Activated naive CD4-positive, alpha-beta T cell treated with anti-CD3 and anti-CD28 coated beads for 36 hours (primary cell): ENCODE measurements at regions of chr20 and their contacts with region 1.

Region 1: DNA sequence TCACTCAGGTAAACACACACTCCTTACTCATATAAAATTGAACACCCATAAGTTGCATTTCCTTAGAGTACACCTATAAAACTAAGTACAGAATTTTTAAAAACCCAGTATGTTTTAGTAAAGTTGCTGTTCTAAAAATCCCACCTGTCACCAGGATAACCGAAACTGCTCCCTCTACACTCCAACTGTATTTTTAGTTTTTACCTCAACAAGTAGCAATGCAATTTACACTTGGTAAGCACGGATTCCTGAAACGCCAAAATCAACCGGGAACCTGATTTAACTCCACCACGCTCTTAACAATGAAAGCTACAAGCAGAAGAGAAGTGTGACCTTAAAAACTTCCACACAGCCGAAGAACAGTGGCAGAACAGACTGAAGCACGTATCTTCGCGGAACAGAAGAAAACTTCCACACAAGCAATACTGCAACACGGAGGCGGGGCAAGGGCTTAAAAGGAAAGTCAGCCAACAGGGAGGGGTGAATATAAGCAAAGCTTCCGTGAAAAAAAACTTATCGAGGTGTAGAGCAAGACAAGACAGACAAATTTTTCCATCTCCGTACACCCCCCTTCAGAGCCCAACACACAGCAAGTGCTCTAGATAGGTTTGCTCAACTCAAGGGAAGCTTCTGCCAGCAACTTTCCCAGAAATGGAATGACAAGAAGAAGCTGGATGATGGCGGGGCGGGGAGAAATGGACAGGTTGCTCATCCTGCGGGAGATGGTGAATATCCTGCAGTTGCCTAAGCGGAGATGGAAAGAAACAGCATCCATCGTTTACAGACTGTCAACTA is 1.4 kb downstream of the STAU1 start:
- DNase-seq: peak; percentile 84
- H3K4me3 Mint-ChIP-seq: peak overlapping the region; percentile 82
- H3K27ac Mint-ChIP-seq: peak overlapping the region; percentile 90
- H3K4me1 Mint-ChIP-seq: peaks cover 49% of the 10 kb centered on the region
- H3K27me3 Mint-ChIP-seq: no peaks in the 10 kb centered on the region

Region 2: GRCh38 chr20:49046087-49046900 is 140.4 kb before region 1 on chr20 and contains the start of gene CSE1L:
- CTCF ChIA-PET with region 1: no interaction called
- intact Hi-C with region 1: loop called (anchors 1 kb)
- DNase-seq: peak; percentile 96
- H3K4me3 Mint-ChIP-seq: peak within 1 kb of the TSS; percentile 98
- H3K27ac Mint-ChIP-seq: peak within 1 kb of the TSS; percentile 99
- H3K4me1 Mint-ChIP-seq: peaks cover 38% of the 10 kb centered on the region
- H3K27me3 Mint-ChIP-seq: no peaks in the 10 kb centered on the region
- total RNA-seq, gene CSE1L: 86.1 to 88.9 TPM

Region 3: GRCh38 chr20:49132995-49133478 is 53.7 kb before region 1 on chr20:
- CTCF ChIA-PET with region 1: interaction called, 16 read pairs
- intact Hi-C with region 1: loop called (anchors 1 kb)
- DNase-seq: peak; percentile 11
- H3K4me3 Mint-ChIP-seq: no peak overlapping the region
- H3K27ac Mint-ChIP-seq: no peak overlapping the region
- H3K4me1 Mint-ChIP-seq: peaks cover 3% of the 10 kb centered on the region
- H3K27me3 Mint-ChIP-seq: no peaks in the 10 kb centered on the region

Region 4: DNA sequence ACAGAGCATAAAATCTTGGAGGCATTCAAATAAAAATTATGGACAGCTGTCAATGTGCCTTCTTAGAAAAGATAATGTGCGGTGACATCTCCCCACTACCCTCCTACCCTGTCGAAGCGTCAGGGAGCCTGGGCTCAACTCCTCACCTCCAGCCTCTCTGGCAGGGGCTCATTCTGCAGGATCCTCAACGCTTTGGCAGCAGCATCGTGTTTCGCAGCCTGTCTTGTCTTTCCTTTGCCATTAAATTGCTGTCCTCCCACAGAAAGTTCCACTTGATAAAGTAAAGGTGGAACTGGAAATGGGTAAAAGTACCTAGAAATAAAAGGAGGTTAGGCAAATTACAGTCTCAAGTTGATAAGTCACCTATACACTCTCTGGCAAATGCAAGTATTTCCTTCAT is 35.3 kb before region 1 on chr20:
- CTCF ChIA-PET with region 1: no interaction called
- intact Hi-C with region 1: loop called (anchors 5 kb)
- DNase-seq: no peak
- H3K4me3 Mint-ChIP-seq: no peak overlapping the region
- H3K27ac Mint-ChIP-seq: no peak overlapping the region
- H3K4me1 Mint-ChIP-seq: peaks cover 17% of the 10 kb centered on the region
- H3K27me3 Mint-ChIP-seq: no peaks in the 10 kb centered on the region

Region 5: DNA sequence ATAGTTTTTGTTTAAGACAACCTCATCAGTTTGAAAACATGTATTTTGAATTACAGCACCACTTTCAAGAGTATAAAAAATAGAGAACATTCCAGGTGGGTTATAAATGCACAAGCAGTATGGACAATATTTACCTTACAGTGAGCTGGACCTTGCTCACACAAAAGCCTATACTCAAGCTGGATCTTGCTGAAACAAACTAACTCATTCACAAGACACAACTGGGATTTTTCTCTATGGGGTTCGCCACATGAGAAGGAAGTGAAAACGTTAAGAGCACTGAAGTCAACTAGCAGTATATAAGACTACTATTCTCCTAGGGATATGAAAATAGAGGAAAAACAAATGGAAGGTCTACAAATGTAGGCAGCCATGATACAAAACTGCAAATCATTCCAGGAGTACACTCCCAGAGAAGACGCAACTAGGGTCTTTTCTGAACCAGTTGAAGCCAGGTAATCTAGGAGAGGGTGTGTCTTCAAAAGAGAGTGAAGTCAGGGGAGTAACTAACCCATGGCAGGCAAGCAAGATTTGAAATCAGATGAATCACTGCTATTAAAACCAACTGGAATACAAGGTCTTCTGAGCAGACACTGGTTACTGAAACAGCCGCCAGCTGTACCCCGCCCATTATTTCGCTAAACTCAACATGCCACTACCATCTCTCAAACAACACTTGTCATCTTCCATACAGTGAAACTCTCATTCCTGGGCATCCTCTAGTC is 25.1 kb before region 1 on chr20:
- CTCF ChIA-PET with region 1: interaction called, 3 read pairs
- intact Hi-C with region 1: loop called (anchors 1 kb)
- DNase-seq: no peak
- H3K4me3 Mint-ChIP-seq: no peak overlapping the region
- H3K27ac Mint-ChIP-seq: no peak overlapping the region
- H3K4me1 Mint-ChIP-seq: peaks cover 58% of the 10 kb centered on the region
- H3K27me3 Mint-ChIP-seq: no peaks in the 10 kb centered on the region

Region 6: DNA sequence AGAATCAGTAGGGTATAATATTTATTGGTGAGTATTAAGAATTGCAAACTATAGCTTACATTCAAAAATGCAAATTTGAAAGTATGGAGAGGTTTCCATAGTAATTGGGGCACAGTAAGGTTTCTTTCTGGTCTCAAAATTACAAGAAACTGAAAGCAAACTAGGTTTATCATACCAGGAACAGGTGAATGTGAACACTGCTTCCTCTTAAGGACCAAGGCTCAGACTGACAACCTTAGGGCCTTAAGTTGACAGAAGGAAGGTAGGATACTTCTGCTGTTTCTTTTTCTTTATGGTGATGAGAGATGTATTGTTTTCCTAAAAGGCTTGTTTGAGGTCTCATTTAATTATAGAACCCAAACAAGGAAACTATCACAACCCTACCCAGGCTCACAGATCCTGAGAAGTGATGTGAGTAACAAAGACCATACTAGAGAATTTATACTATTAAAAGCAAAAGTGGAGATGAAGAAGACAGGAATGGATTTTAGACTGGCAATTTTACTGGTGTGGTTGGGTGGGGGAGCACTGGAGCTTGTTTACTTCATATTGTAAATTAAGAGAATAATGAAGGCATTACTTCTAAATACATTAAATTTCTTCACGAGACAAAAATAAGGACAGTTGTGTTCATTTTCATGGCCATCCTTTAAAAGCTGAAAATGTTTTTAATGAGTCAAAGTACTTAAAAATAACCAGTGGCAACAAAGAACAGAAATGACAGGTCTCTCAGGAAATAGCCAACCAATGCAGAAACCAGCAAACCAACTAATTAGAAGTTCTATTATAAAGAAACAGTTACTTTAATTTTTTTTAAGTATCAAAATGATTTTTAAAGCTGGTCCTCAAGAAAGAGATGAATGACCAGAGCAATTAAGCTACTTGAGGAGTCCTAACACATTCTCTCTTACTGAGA is 19.9 kb before region 1 on chr20:
- CTCF ChIA-PET with region 1: interaction called, 3 read pairs
- intact Hi-C with region 1: loop called (anchors 1 kb)
- DNase-seq: no peak
- H3K4me3 Mint-ChIP-seq: peak overlapping the region; percentile 48
- H3K27ac Mint-ChIP-seq: peak overlapping the region; percentile 84
- H3K4me1 Mint-ChIP-seq: peaks cover 71% of the 10 kb centered on the region
- H3K27me3 Mint-ChIP-seq: no peaks in the 10 kb centered on the region